ENCODE measurements at regions of chr11 and their contacts with region 1.

Region 1: DNA sequence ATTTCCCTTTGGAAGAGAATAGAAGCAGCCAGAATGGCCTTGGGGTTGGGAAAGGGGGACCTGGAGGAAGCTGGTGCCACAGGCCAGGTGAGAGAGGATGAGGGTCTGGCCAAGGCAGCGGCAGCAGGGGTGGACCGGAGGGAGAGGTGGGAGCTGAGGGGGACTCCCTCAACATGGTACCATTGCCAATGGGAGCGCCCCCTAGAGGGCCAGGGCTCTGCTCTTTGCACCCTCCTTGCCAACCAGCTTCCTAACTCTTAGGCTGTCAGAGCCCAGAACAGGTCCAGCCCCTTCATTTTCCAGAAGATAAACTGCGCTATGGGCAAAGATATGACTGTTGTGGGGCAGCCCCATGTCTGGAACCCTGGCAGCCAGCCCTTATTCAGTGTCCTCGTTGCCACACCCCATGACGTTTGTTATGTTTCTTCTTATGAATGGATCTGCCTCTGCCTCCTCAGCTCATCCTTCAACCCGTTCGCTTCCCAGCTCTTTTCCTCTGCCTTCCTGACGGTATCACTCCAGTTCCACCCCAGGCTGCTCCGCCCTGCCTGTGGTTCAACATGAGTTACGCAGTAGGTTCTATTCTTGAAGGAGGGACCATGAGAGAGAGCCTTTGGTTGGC is 185.2 kb downstream of the GRIK4 start:
- DNase-seq: no peak
- H3K4me3 ChIP-seq: no peak overlapping the region
- H3K27ac ChIP-seq: no peak overlapping the region
- H3K27me3 ChIP-seq: peaks cover 21% of the 10 kb centered on the region
- CTCF ChIP-seq: no peak

Region 2: DNA sequence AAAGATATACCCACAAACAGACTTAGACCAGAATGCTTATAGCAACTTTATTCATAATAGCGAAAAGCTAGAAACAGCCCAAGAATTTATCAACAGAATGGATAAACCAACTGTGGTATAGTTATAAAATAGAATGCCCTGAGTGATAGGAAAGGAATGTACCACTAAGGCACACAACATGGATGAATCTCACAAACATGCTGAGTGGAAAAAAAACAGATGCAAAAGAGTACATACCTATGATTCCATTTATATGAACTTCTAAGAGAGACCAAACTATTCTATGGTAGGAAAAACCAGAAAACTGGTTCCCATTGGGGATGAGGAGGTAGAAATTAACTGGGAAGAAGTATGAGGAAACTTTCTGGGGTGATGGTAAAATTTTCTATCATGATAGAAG is 225.6 kb before region 1 on chr11:
- CTCF ChIA-PET with region 1: no interaction called
- POLR2A ChIA-PET with region 1: no interaction called
- DNase-seq: peak; percentile 56
- H3K4me3 ChIP-seq: no peak overlapping the region
- H3K27ac ChIP-seq: no peak overlapping the region
- H3K27me3 ChIP-seq: no peaks in the 10 kb centered on the region
- CTCF ChIP-seq: no peak

Region 3: GRCh38 chr11:120564573-120565311 is 132.0 kb before region 1 on chr11:
- CTCF ChIA-PET with region 1: no interaction called
- POLR2A ChIA-PET with region 1: no interaction called
- DNase-seq: no peak
- H3K4me3 ChIP-seq: peak overlapping the region; percentile 47
- H3K27ac ChIP-seq: no peak overlapping the region
- H3K27me3 ChIP-seq: no peaks in the 10 kb centered on the region
- CTCF ChIP-seq: peak; percentile 32

Region 4: DNA sequence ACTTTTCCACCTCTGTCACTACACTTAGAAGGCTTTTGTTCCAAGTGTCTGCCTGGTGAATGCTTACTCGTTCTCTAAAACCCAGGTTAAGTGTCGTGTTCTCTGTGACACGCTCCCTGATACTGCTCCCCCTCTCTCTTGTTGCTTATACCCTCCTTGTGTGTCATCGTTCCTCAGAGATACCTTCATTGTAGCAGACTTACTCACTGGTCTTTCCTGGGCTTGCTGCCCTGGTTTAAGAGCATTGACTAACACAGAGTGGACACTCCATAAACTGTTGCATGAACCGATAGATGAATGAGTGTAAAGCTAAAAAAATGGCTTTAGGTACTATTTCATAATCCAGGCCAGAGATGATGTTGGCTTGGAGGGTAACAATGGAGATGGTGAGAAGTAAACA is 13.8 kb before region 1 on chr11:
- CTCF ChIA-PET with region 1: interaction called, 15 read pairs
- POLR2A ChIA-PET with region 1: no interaction called
- DNase-seq: peak; percentile 24
- H3K4me3 ChIP-seq: no peak overlapping the region
- H3K27ac ChIP-seq: no peak overlapping the region
- H3K27me3 ChIP-seq: peaks cover 5% of the 10 kb centered on the region
- CTCF ChIP-seq: no peak